MCF 10A (cell line): ENCODE measurements at regions of chr6 and their contacts with region 1.

Region 1: GRCh38 chr6:1609648-1610496 is at the start of gene FOXC1:
- DNase-seq: peak; percentile 94
- H3K4me3 Mint-ChIP-seq: peak within 1 kb of the TSS; percentile 92
- H3K27ac Mint-ChIP-seq: peak within 1 kb of the TSS; percentile 84
- H3K4me1 Mint-ChIP-seq: no peaks in the 10 kb centered on the region
- H3K27me3 Mint-ChIP-seq: no peaks in the 10 kb centered on the region
- CTCF ChIP-seq: no peak
- total RNA-seq, gene FOXC1: 16.7 and 16.8 TPM in 2 replicates

Region 2: DNA sequence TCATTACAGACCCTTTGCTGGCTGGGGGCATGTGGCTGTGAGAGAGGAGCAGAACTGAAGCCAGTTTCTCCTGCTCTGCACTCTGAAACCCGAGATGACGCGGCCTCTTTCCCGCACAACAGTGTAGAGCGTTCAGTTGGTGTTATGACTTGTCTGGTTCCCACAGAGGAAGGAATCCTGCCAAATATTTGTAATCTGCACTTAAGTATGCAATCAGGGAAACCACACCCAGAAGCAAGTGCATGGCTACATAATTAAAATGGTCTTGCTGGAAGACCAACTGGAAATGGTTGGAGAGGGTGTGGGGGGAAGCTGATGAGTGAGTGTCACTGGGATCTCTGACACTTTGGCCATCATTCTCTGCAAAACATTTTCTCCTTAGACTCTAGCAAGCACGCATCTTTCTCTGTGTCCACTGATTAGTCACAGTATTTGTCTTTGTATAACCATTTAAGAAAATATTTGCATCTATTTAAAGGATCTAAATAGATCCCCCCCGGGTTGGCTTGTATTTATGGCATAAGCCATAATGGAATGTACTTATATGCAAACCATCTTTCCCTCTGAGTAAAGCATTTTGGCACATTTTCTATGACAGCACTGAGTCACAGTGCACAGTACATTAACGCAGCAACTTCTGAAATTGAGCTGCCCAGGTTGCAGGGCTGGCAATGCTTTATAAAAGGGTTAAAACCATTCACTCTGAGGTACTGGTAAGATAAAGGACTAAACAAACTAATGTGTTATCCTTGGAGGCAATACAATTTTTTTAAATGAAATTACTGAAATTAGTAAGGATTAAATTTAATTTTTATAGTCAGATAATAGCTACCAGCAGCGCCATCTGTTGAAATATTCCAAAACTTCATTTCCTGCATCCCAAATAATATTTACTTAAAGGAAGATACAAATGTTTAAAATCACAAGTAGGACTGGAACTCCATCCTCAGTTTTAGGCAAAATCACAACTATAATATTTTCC is 76.5 kb after region 1 on chr6:
- CTCF ChIA-PET with region 1: interaction called, 24 read pairs
- POLR2A ChIA-PET with region 1: interaction called, 29 read pairs
- intact Hi-C with region 1: loop called (anchors 1 kb)
- DNase-seq: peak; percentile 96
- H3K4me3 Mint-ChIP-seq: peak overlapping the region; percentile 47
- H3K27ac Mint-ChIP-seq: peak overlapping the region; percentile 82
- H3K4me1 Mint-ChIP-seq: peaks cover 46% of the 10 kb centered on the region
- H3K27me3 Mint-ChIP-seq: no peaks in the 10 kb centered on the region
- CTCF ChIP-seq: peak; percentile 25

Region 3: GRCh38 chr6:1952726-1953360 is 343.0 kb after region 1 on chr6:
- CTCF ChIA-PET with region 1: interaction called, 3 read pairs
- POLR2A ChIA-PET with region 1: interaction called, 4 read pairs
- intact Hi-C with region 1: loop called (anchors 2 kb)
- DNase-seq: peak; percentile 98
- H3K4me3 Mint-ChIP-seq: peak overlapping the region; percentile 68
- H3K27ac Mint-ChIP-seq: peak overlapping the region; percentile 100
- H3K4me1 Mint-ChIP-seq: peaks cover 18% of the 10 kb centered on the region
- H3K27me3 Mint-ChIP-seq: no peaks in the 10 kb centered on the region
- CTCF ChIP-seq: no peak

Region 4: DNA sequence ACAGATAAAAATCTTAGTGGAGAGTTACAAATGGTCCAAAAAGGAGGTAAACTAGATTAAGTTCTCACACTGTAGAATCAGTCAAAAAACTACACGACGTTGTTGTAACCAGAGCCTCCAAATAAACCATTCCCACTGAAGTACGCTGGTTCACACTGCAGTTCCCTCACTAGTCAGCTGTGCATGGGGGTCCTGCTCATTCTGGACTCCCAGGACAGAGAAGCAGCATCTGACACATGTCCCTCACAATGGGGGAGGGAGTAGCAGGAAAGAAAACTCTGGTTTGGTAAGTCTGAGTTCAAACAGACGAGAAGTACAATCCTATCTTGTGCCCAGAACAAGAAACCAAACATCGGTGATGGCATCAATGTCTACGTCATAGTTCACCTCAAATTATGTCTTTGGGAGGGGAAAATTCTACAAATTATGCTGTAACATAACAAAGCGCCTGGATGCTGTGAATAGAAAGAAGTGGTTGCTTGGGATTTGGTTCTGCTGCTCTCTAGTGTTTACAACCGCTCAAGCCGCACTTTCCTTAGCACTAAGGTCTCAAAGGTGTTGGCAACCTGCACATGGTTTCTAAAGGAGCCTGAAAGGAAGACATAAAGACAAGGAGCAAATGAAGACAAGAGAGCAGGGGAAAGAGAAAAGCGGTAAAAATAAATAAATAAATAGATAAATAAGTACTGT is 427.5 kb after region 1 on chr6:
- CTCF ChIA-PET with region 1: no interaction called
- POLR2A ChIA-PET with region 1: no interaction called
- intact Hi-C with region 1: loop called (anchors 1 kb)
- DNase-seq: no peak
- H3K4me3 Mint-ChIP-seq: no peak overlapping the region
- H3K27ac Mint-ChIP-seq: no peak overlapping the region
- H3K4me1 Mint-ChIP-seq: no peaks in the 10 kb centered on the region
- H3K27me3 Mint-ChIP-seq: no peaks in the 10 kb centered on the region
- CTCF ChIP-seq: peak; percentile 13

Region 5: DNA sequence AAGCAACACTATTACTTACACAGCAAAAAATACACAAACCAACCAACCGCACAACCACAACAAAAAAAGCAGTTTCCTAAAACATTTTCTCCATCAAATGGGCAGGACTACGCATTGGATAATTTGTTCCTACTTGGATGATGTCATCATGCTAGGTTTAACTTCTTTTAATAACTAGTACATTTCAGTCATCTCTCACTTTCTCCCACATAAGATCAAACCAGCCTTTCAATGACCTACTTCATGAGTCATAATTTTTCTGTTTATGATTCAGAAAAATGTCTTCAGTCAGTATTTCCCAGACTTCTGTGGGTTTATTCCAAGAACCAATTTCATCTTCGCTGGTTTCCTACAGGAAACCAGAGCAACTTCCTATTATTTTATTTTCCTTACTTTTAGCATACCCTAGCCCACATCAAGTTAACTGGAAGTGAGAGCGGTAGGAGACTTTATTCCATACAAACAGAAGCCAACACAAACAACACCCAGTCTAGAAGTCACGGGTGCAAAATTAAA is 501.3 kb after region 1 on chr6:
- CTCF ChIA-PET with region 1: interaction called, 10 read pairs
- POLR2A ChIA-PET with region 1: interaction called, 6 read pairs
- intact Hi-C with region 1: no loop called
- DNase-seq: peak; percentile 75
- H3K4me3 Mint-ChIP-seq: peak overlapping the region; percentile 55
- H3K27ac Mint-ChIP-seq: peak overlapping the region; percentile 75
- H3K4me1 Mint-ChIP-seq: peaks cover 16% of the 10 kb centered on the region
- H3K27me3 Mint-ChIP-seq: no peaks in the 10 kb centered on the region
- CTCF ChIP-seq: no peak